ENCODE measurements at regions of chr19 and their contacts with region 1.

Region 1: GRCh38 chr19:44764975-44765948 is 12.4 kb upstream of the CBLC start:
- DNase-seq: peak; percentile 84
- H3K4me3 ChIP-seq: no peak overlapping the region
- H3K27ac ChIP-seq: peak overlapping the region; percentile 63 to 83 (median 72)
- H3K4me1 ChIP-seq: peaks cover 0 to 42% (median 12%) of the 10 kb centered on the region in 4 donors
- H3K27me3 ChIP-seq: no peaks in the 10 kb centered on the region
- CTCF ChIP-seq: no peak
- EP300 ChIP-seq: peak; percentile 22
- POLR2A ChIP-seq: no peak

Region 2: DNA sequence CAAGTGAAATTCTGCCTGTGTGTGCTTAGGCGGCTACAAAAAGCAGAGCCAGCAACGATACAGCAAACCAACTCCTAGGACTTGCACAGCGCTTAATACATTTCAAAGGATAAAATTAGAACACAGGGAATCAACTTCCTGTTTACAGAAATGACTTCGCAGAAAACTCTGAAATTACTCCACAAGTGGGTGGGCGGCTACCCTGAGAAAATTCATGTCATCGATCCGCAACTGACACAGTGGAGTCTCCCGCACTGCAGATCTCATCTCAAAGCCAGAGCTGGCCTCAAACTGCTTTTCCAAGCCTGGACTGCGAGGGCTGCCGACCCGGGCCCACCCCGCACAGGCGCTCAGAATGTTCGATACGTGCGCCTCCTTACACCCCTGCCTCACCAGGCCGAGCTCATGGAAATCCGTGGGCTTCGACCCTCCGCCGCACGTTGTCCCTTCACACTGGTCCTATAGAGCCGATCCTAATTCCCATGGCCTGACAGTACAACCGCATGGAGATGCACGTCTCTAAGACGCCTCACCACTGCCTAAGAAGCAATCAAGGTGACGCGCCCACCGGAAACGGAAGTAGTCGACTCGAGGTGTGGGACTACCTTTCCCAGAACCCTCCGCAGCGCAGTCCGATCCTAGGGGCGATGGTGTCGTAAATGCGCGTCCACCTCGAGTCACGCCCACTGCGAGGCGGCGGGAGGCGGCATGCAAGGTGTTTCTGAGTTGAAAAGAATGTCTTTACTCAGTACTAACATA is 317.2 kb before region 1 on chr19 and contains the start of gene ZNF229:
- in situ Hi-C with region 1: no loop called
- intact Hi-C with region 1: no loop called
- DNase-seq: peak; percentile 72
- H3K4me3 ChIP-seq: peak within 1 kb of the TSS; percentile 18 to 54 (median 39)
- H3K27ac ChIP-seq: peak within 1 kb of the TSS in 1 of 4 donors; percentile 30
- H3K4me1 ChIP-seq: peaks cover 0 to 6% (median 2%) of the 10 kb centered on the region in 4 donors
- H3K27me3 ChIP-seq: no peaks in the 10 kb centered on the region
- CTCF ChIP-seq: no peak
- EP300 ChIP-seq: no peak
- POLR2A ChIP-seq: no peak
- total RNA-seq, gene ZNF229: 0.64 to 7.1 (median 1.1) TPM

Region 3: GRCh38 chr19:44723952-44724319 is 41.3 kb before region 1 on chr19:
- in situ Hi-C with region 1: loop called (anchors 5 kb)
- intact Hi-C with region 1: no loop called
- DNase-seq: peak; percentile 90
- H3K4me3 ChIP-seq: peak overlapping the region in 2 of 4 donors; percentile 10 to 25
- H3K27ac ChIP-seq: peak overlapping the region; percentile 81 to 90 (median 82)
- H3K4me1 ChIP-seq: peaks cover 8 to 70% (median 40%) of the 10 kb centered on the region in 4 donors
- H3K27me3 ChIP-seq: no peaks in the 10 kb centered on the region
- CTCF ChIP-seq: peak; percentile 96 to 99 (median 97)
- EP300 ChIP-seq: no peak
- POLR2A ChIP-seq: peak; percentile 30

Region 4: GRCh38 chr19:44808463-44809371 is 43.5 kb after region 1 on chr19 and contains the start of gene BCAM:
- in situ Hi-C with region 1: no loop called
- intact Hi-C with region 1: no loop called
- DNase-seq: peak; percentile 70
- H3K4me3 ChIP-seq: peak within 1 kb of the TSS; percentile 17 to 58 (median 39)
- H3K27ac ChIP-seq: peak within 1 kb of the TSS; percentile 39 to 64 (median 50)
- H3K4me1 ChIP-seq: peaks cover 15 to 26% (median 22%) of the 10 kb centered on the region in 4 donors
- H3K27me3 ChIP-seq: peaks cover 3% of the 10 kb centered on the region
- CTCF ChIP-seq: no peak
- EP300 ChIP-seq: no peak
- POLR2A ChIP-seq: no peak
- total RNA-seq, gene BCAM: 7.9 to 95.1 (median 23.1) TPM

Measured in transverse colon (tissue), 4 donors.